ENCODE measurements at regions of chr6 and their contacts with region 1.

Region 1: GRCh38 chr6:35081426-35081851 is 59.7 kb downstream of the TCP11 start:
- H3K4me3 Mint-ChIP-seq: peak overlapping the region; percentile 51
- H3K27ac Mint-ChIP-seq: peak overlapping the region; percentile 82
- H3K4me1 Mint-ChIP-seq: peaks cover 33% of the 10 kb centered on the region
- H3K27me3 Mint-ChIP-seq: no peaks in the 10 kb centered on the region

Region 2: GRCh38 chr6:34819571-34820480 is 261.6 kb before region 1 on chr6:
- intact Hi-C with region 1: no loop called
- H3K4me3 Mint-ChIP-seq: peak overlapping the region; percentile 11
- H3K27ac Mint-ChIP-seq: peak overlapping the region; percentile 91
- H3K4me1 Mint-ChIP-seq: peaks cover 33% of the 10 kb centered on the region
- H3K27me3 Mint-ChIP-seq: no peaks in the 10 kb centered on the region

Region 3: GRCh38 chr6:34986845-34987246 is 94.6 kb before region 1 on chr6:
- intact Hi-C with region 1: no loop called
- H3K4me3 Mint-ChIP-seq: no peak overlapping the region
- H3K27ac Mint-ChIP-seq: no peak overlapping the region
- H3K4me1 Mint-ChIP-seq: peaks cover 5% of the 10 kb centered on the region
- H3K27me3 Mint-ChIP-seq: no peaks in the 10 kb centered on the region

Region 4: DNA sequence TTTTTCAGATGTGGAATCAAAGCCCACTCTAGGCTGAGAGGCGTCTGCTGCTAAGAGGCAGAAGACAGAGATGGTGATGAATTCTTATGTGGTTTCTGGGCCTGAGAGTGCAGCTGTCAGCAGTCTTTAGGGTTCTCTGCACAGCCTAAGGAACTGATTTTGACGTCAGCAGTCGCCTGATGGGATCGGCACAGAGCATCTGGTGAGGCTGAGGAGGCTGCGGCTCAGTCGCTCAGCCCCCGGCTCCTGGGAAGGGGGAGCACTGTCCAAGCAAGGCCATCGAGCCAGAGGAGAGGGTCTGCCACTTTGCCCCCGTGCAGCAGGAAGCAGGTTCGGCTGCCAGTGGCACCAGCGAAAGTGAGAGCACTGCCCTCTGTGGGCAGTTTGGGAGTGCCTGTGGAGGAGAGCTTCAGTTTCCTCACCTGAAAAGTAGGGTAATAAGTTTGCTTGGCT is 32.8 kb before region 1 on chr6:
- intact Hi-C with region 1: loop called (anchors 5 kb)
- H3K4me3 Mint-ChIP-seq: no peak overlapping the region
- H3K27ac Mint-ChIP-seq: no peak overlapping the region
- H3K4me1 Mint-ChIP-seq: peaks cover 34% of the 10 kb centered on the region
- H3K27me3 Mint-ChIP-seq: no peaks in the 10 kb centered on the region

Region 5: DNA sequence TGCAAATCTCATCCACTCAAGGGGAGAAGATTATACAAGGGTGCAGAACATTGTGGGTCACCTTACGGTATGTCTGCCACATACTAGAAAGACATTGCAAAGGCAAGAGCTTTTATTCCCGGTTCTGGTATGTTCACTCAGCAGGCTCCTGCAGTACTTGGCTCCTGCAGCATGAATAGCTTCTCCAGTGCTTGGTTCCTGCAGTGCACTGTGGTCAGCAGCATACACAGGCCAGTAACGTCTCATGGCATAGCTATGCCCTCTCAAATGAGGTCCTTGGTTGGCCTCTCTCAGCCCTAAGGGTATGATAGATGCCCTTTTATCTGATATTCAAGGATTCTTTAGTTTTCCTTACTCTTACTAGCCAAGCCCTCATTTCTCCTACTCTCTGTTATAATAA is 47.1 kb after region 1 on chr6:
- intact Hi-C with region 1: no loop called
- H3K4me3 Mint-ChIP-seq: no peak overlapping the region
- H3K27ac Mint-ChIP-seq: no peak overlapping the region
- H3K4me1 Mint-ChIP-seq: no peaks in the 10 kb centered on the region
- H3K27me3 Mint-ChIP-seq: no peaks in the 10 kb centered on the region

Region 6: DNA sequence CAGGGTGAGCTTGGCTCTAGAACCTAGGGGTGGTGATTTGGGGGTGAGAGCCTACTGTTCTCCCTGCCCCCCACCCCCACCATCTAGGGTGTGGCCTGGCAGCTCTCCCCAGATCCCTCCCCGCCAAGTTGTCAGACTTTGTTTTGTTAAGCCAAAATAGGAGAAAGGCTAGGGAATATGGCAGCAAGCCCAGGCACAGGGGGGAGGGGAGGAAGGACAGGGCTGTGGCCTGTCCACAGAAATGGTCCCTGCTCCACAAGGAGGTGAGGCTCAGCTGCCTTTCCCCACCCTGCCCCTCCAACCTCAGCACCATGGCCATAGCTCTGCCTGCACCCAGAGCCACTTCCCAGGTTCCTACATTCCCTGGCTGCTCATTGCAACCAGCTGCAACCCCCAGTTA is 149.5 kb after region 1 on chr6:
- intact Hi-C with region 1: no loop called
- H3K4me3 Mint-ChIP-seq: no peak overlapping the region
- H3K27ac Mint-ChIP-seq: no peak overlapping the region
- H3K4me1 Mint-ChIP-seq: no peaks in the 10 kb centered on the region
- H3K27me3 Mint-ChIP-seq: peaks cover 21% of the 10 kb centered on the region

Measured in dendritic cell treated with granulocyte-macrophage colony-stimulating factor and Interleukin-4, amounts not matched to agents 40 ng/mL and 50 ng/mL, for 4 days (primary cell).